Left lung (tissue), 14 donors: ENCODE measurements at regions of chr9 and their contacts with region 1.

Region 1: DNA sequence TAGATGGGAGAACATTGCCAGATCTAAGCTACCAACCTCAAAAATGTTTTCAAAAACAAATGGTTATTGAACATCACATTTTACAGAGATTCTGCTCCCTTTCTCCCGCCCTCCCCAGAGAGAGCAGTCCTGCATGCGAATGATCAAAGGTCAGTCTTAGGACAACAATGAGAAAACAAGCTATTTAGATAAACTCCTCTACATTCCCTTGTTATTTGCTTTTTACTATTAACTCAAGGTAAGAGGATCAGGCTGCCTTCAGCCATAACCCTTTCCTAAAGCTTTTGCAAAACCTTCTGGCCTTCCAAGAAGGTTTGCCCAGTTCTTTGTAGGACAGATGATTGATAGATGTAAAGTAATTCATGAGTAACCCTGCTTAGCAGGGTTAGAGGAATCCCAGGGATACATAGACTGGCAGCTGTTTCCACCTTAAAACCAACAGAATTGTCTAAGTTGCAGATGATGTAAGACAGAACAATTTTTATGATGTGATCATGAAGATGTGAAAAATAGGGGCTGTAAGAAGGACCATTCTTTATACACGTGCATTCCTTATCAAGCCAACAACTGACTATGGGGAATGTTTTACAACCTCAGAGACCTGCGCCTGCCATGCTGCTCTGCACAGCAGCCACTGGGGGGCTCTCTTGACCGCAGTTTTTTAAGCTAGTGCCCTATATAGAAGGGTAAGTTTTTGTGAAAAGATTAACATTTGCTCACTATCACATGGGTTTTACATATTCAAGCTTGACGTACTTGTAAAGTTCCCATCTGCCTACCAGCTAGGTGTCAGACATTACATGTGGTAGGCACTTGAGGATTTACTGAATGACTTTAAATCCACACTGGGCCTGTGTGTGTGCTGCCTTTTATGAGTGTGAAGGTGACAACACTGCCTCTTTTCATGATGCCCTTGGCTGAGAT is 2.3 kb upstream of the ZNF782 start:
- DNase-seq: peak; percentile 41 to 83 (median 70)
- ATAC-seq: peak; percentile 73
- H3K4me3 ChIP-seq: no peak overlapping the region
- H3K27ac ChIP-seq: no peak overlapping the region
- H3K4me1 ChIP-seq: peaks cover 9 to 26% of the 10 kb centered on the region in 2 donors
- H3K27me3 ChIP-seq: peaks cover 0 to 16% of the 10 kb centered on the region in 2 donors
- CTCF ChIP-seq: peak; percentile 87 to 93

Region 2: DNA sequence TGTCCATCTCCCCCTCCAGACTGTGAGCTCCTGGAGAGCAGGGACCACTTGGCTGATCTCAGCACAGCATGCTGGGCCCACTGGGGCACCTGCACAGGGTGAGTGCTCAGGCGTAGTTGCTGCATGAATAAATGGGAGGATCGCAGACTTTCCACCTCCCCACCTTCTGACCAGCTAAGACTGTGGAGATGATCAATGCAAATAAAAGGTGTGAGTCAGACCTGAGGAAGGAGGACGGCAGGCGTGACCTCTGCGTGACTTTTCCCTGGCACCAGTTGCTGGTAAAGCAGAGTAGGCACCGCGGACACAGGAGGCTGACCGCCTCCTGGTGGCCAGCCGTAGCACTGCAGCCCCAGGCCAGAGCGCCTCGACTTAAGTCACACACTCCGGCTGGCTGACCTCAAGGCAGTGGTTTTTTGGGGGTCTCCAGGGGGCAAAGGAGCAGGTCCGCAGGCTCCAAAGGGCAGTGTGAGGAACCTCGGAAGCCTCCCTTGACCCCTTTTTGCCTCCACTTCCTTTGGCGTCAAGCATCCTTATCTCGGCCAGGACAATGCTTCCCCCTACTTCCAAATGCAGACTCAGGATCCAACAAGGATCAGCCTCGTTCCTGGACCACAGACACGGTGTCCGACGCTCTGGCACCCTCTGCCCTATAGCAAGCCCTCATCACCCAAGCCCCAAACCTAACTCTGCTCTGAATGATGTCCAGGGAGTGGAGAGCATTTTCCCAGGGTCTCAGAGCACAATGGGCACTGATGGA is 542.6 kb after region 1 on chr9:
- intact Hi-C with region 1: loop called in 1 of 2 experiments (anchors 5 kb)
- DNase-seq: peak; percentile 25 to 95 (median 69)
- ATAC-seq: peak; percentile 99
- H3K4me3 ChIP-seq: no peak overlapping the region
- H3K27ac ChIP-seq: no peak overlapping the region
- H3K4me1 ChIP-seq: peaks cover 0 to 6% of the 10 kb centered on the region in 2 donors
- H3K27me3 ChIP-seq: no peaks in the 10 kb centered on the region
- CTCF ChIP-seq: peak; percentile 97 to 98

Region 3: GRCh38 chr9:97468658-97469448 is 612.2 kb after region 1 on chr9:
- intact Hi-C with region 1: no loop called
- DNase-seq: peak in 3 of 4 donors; percentile 38 to 76 (median 70)
- ATAC-seq: peak; percentile 99
- H3K4me3 ChIP-seq: no peak overlapping the region
- H3K27ac ChIP-seq: no peak overlapping the region
- H3K4me1 ChIP-seq: no peaks in the 10 kb centered on the region
- H3K27me3 ChIP-seq: no peaks in the 10 kb centered on the region
- CTCF ChIP-seq: peak; percentile 48 to 61